Heart left ventricle (tissue), 16 donors: ENCODE measurements at regions of chr13 and their contacts with region 1.

Region 1: DNA sequence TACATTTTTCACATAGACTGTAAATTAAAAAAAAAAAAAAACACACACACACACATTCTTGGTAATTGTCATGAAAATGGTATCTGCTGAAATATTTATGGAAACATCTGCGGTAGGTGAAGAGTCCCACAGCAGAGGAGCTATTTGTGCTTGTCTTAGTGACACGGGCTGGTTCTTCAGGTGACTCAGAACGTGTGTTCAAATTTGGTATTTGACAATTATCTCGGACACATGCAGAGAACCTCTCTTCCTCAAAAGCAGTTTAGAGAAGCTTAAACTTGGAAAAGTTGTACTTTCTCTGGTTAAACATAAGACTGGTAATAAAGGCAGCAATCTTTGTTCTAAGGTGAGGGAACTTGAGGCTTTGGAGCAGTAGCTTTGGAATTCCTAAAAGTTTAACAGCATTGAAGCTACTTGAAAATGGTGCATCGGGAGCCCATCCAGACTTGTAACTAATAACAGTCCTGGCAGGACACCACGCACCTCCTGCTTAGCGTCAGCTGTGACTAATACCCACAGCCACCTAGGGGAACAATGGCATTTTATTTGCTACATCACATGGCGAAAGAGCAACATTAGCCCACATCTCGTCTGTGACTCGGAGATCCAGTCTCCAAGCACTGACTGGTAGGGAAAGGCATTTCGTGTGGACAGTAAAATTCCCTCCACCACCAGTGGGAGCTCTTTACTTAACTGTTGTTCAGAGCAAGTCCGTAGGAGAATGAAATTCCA is 1505.1 kb upstream of the SLC10A2 start:
- DNase-seq: peak in 4 of 5 donors; percentile 44 to 62 (median 59)
- ATAC-seq: peak; percentile 64 to 87 (median 82)
- H3K4me3 ChIP-seq: peak overlapping the region in 1 of 12 donors; percentile 2
- H3K27ac ChIP-seq: no peak overlapping the region
- H3K4me1 ChIP-seq: peaks cover 0 to 9% (median 0%) of the 10 kb centered on the region in 12 donors
- H3K27me3 ChIP-seq: peaks cover 0 to 5% (median 0%) of the 10 kb centered on the region in 9 donors
- CTCF ChIP-seq: peak; percentile 38 to 79 (median 64)
- POLR2A ChIP-seq: no peak

Region 2: GRCh38 chr13:103883164-103883563 is 688.2 kb before region 1 on chr13:
- intact Hi-C with region 1: loop called in 1 of 10 experiments (anchors 10 kb)
- DNase-seq: peak; percentile 64 to 89 (median 87)
- ATAC-seq: peak; percentile 92 to 100 (median 96)
- H3K4me3 ChIP-seq: peak overlapping the region in 4 of 12 donors; percentile 7 to 29 (median 20)
- H3K27ac ChIP-seq: no peak overlapping the region
- H3K4me1 ChIP-seq: peaks cover 0 to 6% (median 0%) of the 10 kb centered on the region in 12 donors
- H3K27me3 ChIP-seq: no peaks in the 10 kb centered on the region
- CTCF ChIP-seq: peak in 10 of 12 donors; percentile 8 to 63 (median 48)
- POLR2A ChIP-seq: no peak

Region 3: GRCh38 chr13:104625201-104625600 is 53.9 kb after region 1 on chr13:
- intact Hi-C with region 1: no loop called
- DNase-seq: no peak
- ATAC-seq: no peak
- H3K4me3 ChIP-seq: no peak overlapping the region
- H3K27ac ChIP-seq: no peak overlapping the region
- H3K4me1 ChIP-seq: no peaks in the 10 kb centered on the region
- H3K27me3 ChIP-seq: no peaks in the 10 kb centered on the region
- CTCF ChIP-seq: no peak
- POLR2A ChIP-seq: no peak